Heart right ventricle (tissue), 16 donors: ENCODE measurements at regions of chr16 and their contacts with region 1.

Region 1: GRCh38 chr16:50368410-50369132 is at the start of gene BRD7:
- DNase-seq: peak; percentile 41 to 73
- ATAC-seq: peak; percentile 62 to 89 (median 66)
- H3K4me3 ChIP-seq: peak within 1 kb of the TSS; percentile 68 to 99 (median 92)
- H3K27ac ChIP-seq: peak within 1 kb of the TSS in 9 of 10 donors; percentile 55 to 88 (median 69)
- H3K4me1 ChIP-seq: peaks cover 9 to 54% (median 33%) of the 10 kb centered on the region in 9 donors
- H3K27me3 ChIP-seq: no peaks in the 10 kb centered on the region
- CTCF ChIP-seq: peak; percentile 22 to 84 (median 48)
- total RNA-seq, gene BRD7: 35.3 to 50.9 (median 43.6) TPM

Region 2: GRCh38 chr16:50024684-50025536 is 343.7 kb before region 1 on chr16 and contains the start of gene CNEP1R1:
- intact Hi-C with region 1: loop called in 2 of 10 experiments (anchors 5 to 10 kb)
- DNase-seq: peak; percentile 93 to 96
- ATAC-seq: peak; percentile 100
- H3K4me3 ChIP-seq: peak within 1 kb of the TSS; percentile 80 to 100 (median 96)
- H3K27ac ChIP-seq: peak within 1 kb of the TSS; percentile 36 to 96 (median 90)
- H3K4me1 ChIP-seq: peaks cover 0 to 31% (median 17%) of the 10 kb centered on the region in 9 donors
- H3K27me3 ChIP-seq: no peaks in the 10 kb centered on the region
- CTCF ChIP-seq: peak; percentile 97 to 100 (median 100)
- total RNA-seq, gene CNEP1R1: 12.4 to 20.6 (median 17.6) TPM

Region 3: GRCh38 chr16:50548125-50548908 is 179.7 kb after region 1 on chr16 and contains the start of gene NKD1:
- intact Hi-C with region 1: loop called in 1 of 10 experiments (anchors 10 kb)
- DNase-seq: peak; percentile 54 to 72
- ATAC-seq: peak; percentile 78 to 91 (median 86)
- H3K4me3 ChIP-seq: peak within 1 kb of the TSS; percentile 40 to 68 (median 66)
- H3K27ac ChIP-seq: peak within 1 kb of the TSS in 2 of 10 donors; percentile 13 to 28
- H3K4me1 ChIP-seq: peaks cover 0 to 14% (median 9%) of the 10 kb centered on the region in 9 donors
- H3K27me3 ChIP-seq: peaks cover 0 to 54% (median 32%) of the 10 kb centered on the region in 7 donors
- CTCF ChIP-seq: no peak
- total RNA-seq, gene NKD1: 0.22 to 1.1 (median 0.52) TPM

Region 4: DNA sequence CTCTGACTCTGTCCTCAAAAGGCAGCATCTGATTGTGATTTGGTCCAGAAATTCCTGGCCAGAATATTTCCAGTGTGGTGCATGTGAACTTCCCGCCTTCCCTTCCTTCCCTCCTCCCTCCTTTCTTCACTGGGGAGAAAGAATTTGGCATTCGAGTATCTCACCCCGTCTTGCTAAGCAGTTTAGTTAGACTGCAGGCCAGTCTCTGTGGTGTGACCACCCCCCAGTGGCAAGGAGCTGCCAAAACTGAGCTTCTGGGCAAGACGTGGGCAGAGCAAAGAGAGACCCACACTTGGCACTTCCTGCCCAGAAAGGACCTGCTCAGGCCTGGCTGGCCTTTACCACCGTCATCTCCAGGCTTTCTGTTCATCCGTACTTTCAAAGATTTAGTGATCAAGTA is 276.2 kb after region 1 on chr16:
- intact Hi-C with region 1: loop called in 1 of 10 experiments (anchors 10 kb)
- DNase-seq: peak in 1 of 2 donors; percentile 13
- ATAC-seq: peak in 5 of 8 donors; percentile 42 to 62 (median 52)
- H3K4me3 ChIP-seq: no peak overlapping the region
- H3K27ac ChIP-seq: no peak overlapping the region
- H3K4me1 ChIP-seq: no peaks in the 10 kb centered on the region
- H3K27me3 ChIP-seq: peaks cover 0 to 21% (median 6%) of the 10 kb centered on the region in 7 donors
- CTCF ChIP-seq: peak; percentile 17 to 56 (median 36)

Region 5: DNA sequence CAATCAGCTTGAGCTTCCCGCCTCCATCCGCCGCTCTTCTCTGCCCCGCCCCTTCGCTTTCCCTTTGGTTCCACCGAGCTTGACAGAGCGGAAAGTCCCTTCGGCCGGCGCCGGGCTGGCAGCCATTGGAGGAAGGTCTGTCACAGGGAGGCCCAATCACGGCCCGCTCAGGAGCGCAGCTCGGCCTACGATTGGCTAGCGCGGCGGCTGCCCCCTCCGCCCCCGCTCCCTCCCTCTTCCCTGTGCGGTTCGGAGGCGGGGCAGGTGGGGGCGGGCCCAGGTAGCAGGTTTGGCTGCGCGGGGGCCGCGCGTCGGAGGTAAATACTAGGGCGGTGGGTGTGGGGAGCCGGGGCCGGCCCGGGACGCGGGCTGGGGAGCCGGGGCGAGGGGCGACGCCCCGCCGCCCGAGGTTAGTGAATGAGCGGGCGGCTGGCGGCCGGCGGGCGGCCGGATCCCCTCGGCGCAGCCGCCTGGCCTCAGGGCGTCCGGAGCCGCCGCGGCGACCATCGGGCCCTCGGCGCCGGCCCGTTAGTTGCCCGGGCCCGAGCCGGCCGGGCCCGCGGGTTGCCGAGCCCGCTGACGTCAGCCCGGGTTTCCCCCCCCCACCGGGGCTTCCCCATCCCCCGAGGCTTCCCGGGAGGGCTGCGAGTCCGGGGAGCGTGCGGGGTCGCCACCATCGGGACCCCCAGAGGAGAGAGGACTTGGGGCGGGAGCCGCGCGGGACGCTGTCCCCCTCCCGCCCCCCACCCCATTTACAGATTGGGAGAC is 373.4 kb after region 1 on chr16 and contains the start of gene CYLD:
- intact Hi-C with region 1: loop called in 1 of 10 experiments (anchors 5 kb)
- DNase-seq: peak; percentile 99 to 100
- ATAC-seq: peak; percentile 98 to 100 (median 99)
- H3K4me3 ChIP-seq: peak within 1 kb of the TSS; percentile 48 to 98 (median 93)
- H3K27ac ChIP-seq: peak within 1 kb of the TSS; percentile 75 to 98 (median 90)
- H3K4me1 ChIP-seq: peaks cover 0 to 50% (median 34%) of the 10 kb centered on the region in 9 donors
- H3K27me3 ChIP-seq: no peaks in the 10 kb centered on the region
- CTCF ChIP-seq: no peak
- total RNA-seq, gene CYLD: 21.9 to 61.7 (median 39.9) TPM